ENCODE measurements at regions of chr17 and their contacts with region 1.

Region 1: DNA sequence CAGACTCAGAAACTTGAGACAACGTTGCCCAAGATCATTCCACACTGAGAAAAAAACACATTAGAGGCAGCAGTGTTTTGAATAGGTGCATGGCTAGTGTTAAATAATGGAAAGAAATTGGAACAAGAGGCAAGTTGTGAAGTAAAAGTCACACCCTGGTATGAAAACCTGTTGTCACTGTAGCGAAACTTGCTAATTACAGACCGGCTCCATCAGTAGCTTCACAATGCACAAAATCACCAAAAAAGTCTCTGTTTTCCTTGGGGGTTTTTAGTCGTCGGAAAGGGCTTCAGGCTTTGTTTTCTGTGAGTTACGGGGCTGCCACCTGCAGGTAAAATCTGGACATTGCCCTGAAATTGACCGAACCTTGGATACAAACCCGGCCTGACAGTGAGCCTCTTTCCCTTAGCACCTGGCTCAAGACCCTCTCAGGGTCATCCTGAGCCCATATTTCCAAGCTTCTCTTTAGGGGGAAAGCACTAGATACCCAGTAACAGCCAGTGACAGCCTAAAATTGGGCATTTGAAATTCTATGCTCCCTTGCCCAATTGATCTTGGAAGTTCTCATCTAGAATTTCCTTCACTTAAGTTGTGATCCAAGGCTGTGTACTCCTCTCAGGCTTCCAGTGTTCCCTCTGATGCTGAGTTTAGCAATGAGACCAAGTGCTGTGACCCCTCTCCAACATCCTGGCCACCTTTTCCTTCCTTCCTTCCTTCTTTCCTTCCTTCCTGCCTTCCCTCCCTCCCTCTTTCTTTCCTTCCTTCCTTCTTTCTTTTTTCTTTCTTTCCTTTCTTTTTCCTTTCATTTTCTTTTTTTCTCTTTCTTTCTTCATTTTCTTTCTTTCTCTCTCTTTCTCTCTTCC is 7.2 kb upstream of the GRB2 start:
- DNase-seq: peak; percentile 83
- ATAC-seq: peak; percentile 90
- H3K4me3 Mint-ChIP-seq: peak overlapping the region; percentile 31
- H3K27ac Mint-ChIP-seq: peak overlapping the region; percentile 66
- H3K4me1 Mint-ChIP-seq: peaks cover 27% of the 10 kb centered on the region
- H3K27me3 Mint-ChIP-seq: peaks cover 16% of the 10 kb centered on the region

Region 2: DNA sequence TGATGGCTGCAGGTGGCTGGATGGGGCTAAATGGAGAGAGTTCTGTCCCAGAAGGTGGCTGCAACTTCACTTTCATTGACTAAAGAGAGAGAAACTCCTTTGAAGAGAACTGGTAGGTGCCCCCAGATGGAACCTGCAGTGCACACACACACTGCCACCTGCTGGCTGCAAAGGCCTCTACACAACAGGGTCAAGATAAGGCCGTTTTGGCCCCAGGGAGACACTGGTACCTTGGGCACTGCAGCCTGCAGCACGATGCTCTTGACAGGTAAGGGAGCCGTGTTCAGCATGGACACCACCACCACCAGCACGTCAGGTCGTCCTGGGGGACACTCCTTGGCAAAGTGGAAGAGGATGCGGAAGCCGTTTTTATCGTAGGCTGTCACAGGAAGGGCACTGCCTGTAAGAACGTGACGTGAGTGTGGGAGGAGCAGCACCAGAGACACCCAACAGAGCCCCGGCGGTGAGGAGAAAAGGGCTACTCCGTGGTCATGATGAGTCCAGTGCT is 173.9 kb before region 1 on chr17:
- CTCF ChIA-PET with region 1: interaction called, 10 read pairs
- DNase-seq: peak; percentile 72
- ATAC-seq: peak; percentile 74
- H3K4me3 Mint-ChIP-seq: no peak overlapping the region
- H3K27ac Mint-ChIP-seq: peak overlapping the region; percentile 70
- H3K4me1 Mint-ChIP-seq: peaks cover 32% of the 10 kb centered on the region
- H3K27me3 Mint-ChIP-seq: no peaks in the 10 kb centered on the region

Region 3: GRCh38 chr17:75250009-75250471 is 162.6 kb before region 1 on chr17:
- CTCF ChIA-PET with region 1: interaction called, 10 read pairs
- DNase-seq: peak; percentile 85
- ATAC-seq: peak; percentile 98
- H3K4me3 Mint-ChIP-seq: peak overlapping the region; percentile 75
- H3K27ac Mint-ChIP-seq: peak overlapping the region; percentile 90
- H3K4me1 Mint-ChIP-seq: peaks cover 28% of the 10 kb centered on the region
- H3K27me3 Mint-ChIP-seq: no peaks in the 10 kb centered on the region

Region 4: DNA sequence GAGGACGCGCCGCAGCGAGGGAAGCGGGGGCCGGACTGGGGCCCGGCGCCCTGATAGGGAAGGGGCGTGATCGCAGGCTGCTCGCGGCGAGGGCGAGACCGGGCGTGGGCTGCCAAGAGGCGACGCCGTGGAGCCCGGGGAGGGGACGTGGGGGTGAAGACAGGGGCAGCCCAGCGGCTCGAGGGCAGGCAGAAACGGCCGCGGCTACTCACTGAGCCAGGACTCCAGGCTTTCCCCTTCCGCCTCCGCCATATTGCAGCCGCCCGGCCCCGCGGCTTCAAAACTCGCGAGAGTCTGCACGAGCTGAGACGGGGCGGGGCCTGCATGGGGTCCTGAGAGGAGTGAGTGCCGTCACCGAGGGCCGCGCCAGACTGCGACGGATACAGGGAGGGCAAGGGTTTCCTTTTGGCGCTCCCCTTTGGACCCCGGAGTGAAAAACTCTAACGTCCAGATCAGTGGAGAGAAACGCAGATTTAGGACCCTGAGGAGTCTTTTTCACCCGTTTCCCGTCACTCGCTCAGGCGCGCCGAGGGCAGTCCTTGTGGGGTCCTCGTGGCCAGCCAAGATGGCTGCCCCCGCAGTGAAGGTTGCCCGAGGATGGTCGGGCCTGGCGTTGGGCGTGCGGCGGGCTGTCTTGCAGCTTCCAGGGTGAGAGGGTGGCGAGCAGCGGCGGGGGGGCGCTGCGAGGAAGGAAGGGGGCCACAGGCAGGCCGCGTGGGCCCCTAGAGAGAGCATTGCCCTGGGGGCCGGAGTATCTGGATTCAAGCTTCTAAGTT is 151.2 kb before region 1 on chr17 and contains the starts of genes GGA3 and MRPS7:
- CTCF ChIA-PET with region 1: interaction called, 21 read pairs
- DNase-seq: peak; percentile 97
- ATAC-seq: peak; percentile 96
- H3K4me3 Mint-ChIP-seq: peak within 1 kb of the TSS; percentile 94
- H3K27ac Mint-ChIP-seq: peak within 1 kb of the TSS; percentile 99
- H3K4me1 Mint-ChIP-seq: peaks cover 44% of the 10 kb centered on the region
- H3K27me3 Mint-ChIP-seq: no peaks in the 10 kb centered on the region
- total RNA-seq, gene GGA3: 84.6 to 90.2 TPM
- total RNA-seq, gene MRPS7: 49.5 to 56.9 TPM

Region 5: GRCh38 chr17:75289115-75289831 is 123.4 kb before region 1 on chr17 and contains the start of gene SLC25A19:
- CTCF ChIA-PET with region 1: interaction called, 20 read pairs
- DNase-seq: peak; percentile 100
- ATAC-seq: peak; percentile 92
- H3K4me3 Mint-ChIP-seq: peak within 1 kb of the TSS; percentile 97
- H3K27ac Mint-ChIP-seq: peak within 1 kb of the TSS; percentile 100
- H3K4me1 Mint-ChIP-seq: peaks cover 24% of the 10 kb centered on the region
- H3K27me3 Mint-ChIP-seq: no peaks in the 10 kb centered on the region
- total RNA-seq, gene SLC25A19: 46.3 to 66.4 TPM

Region 6: DNA sequence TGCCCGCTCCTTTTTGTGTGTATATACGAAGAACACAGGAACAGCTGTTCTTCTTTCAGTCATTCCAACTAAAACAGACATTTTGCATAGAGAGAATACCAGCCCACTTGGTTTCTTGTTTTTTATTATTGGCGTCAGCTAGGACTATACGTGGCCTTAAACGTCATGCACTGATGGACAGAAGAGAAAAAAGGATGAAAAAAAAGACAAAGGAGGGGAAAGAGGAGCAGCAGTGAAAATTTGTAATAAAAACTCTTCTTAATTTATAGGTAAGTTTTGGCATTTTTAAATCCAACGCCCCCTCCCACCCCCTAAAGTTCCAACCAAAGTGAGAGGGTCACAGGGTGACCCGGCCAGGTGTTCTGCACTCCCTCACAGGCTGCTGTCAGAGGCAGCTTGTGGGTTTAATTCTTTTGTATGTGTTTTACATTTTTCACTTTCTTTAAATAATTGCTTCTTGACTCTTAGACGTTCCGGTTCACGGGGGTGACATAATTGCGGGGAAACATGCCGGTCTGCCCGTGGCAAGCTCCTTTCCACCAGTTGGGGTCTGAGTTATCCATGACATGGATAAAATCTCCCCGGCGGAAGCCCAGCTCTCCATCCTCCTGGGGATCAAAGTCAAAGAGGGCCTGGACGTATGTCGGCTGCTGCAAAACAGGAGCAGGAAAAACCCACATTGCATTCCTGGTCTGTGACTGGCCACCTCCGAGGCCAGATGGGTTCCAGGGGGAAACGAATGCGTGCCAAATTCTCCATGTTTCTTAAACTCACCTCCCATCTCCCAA is 92.6 kb before region 1 on chr17:
- CTCF ChIA-PET with region 1: interaction called, 33 read pairs
- DNase-seq: no peak
- ATAC-seq: no peak
- H3K4me3 Mint-ChIP-seq: no peak overlapping the region
- H3K27ac Mint-ChIP-seq: no peak overlapping the region
- H3K4me1 Mint-ChIP-seq: peaks cover 26% of the 10 kb centered on the region
- H3K27me3 Mint-ChIP-seq: no peaks in the 10 kb centered on the region

Region 7: DNA sequence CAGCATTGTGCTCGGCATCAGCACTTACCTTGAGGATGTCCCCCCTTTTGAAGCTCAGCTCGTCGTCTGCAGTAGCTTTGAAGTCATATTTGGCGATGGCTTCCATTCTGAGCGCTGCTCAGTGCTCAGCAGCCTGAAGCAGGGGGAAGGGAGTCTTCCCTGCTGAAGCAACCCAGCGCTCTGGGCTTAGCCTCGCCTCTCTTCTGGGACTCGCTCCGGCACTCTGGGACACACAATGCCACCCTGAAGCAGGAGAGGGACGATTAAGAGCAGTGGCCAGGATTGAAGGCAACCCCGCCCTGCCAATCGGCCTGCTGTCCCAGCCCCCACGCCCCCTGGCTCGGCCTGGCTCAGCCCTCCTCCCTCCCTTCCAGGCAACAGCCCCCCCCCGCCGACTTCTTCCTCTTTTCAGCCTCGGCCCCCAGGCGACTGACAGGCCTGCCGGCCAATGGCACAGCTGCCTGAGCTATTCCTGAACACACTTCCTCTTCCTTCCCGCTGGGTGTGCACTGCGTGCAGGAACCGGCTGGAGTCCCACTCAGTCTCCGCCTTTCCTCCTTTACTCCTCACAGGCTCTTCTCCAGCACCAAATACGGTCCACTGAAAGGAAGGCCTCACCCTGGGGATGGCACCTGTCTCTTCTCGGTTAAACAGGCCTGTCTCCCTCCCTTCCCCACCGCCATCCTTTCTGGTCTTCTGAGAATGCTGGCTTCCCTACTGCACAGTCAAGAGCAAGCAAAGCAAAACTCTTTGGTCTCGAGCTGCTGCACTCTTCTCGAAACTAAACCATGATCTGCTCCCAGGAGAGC is 19.0 kb before region 1 on chr17:
- CTCF ChIA-PET with region 1: interaction called, 11 read pairs
- DNase-seq: peak; percentile 91
- ATAC-seq: peak; percentile 96
- H3K4me3 Mint-ChIP-seq: peak overlapping the region; percentile 98
- H3K27ac Mint-ChIP-seq: peak overlapping the region; percentile 67
- H3K4me1 Mint-ChIP-seq: peaks cover 68% of the 10 kb centered on the region
- H3K27me3 Mint-ChIP-seq: no peaks in the 10 kb centered on the region

Measured in activated CD8-positive, alpha-beta memory T cell treated with anti-CD3 and anti-CD28 coated beads, Interleukin-2, amount 10 ng/mL, durations not matched to agents 7 days and 5 days (primary cell).